ENCODE measurements at regions of chr22 and their contacts with region 1.

Region 1: GRCh38 chr22:20463324-20464095 is 25.9 kb upstream of the SCARF2 start:
- DNase-seq: peak in 7 of 9 donors; percentile 38 to 73 (median 66)
- ATAC-seq: peak; percentile 78
- H3K4me3 ChIP-seq: peak overlapping the region; percentile 34
- H3K4me3 Mint-ChIP-seq: peak overlapping the region; percentile 64 to 83 (median 74)
- H3K27ac ChIP-seq: peak overlapping the region; percentile 75
- H3K27ac Mint-ChIP-seq: peak overlapping the region; percentile 97 to 99 (median 98)
- H3K4me1 ChIP-seq: peaks cover 36 to 57% of the 10 kb centered on the region in 2 donors
- H3K4me1 Mint-ChIP-seq: peaks cover 35 to 78% (median 71%) of the 10 kb centered on the region in 7 donors
- H3K27me3 ChIP-seq: no peaks in the 10 kb centered on the region
- H3K27me3 Mint-ChIP-seq: no peaks in the 10 kb centered on the region

Region 2: DNA sequence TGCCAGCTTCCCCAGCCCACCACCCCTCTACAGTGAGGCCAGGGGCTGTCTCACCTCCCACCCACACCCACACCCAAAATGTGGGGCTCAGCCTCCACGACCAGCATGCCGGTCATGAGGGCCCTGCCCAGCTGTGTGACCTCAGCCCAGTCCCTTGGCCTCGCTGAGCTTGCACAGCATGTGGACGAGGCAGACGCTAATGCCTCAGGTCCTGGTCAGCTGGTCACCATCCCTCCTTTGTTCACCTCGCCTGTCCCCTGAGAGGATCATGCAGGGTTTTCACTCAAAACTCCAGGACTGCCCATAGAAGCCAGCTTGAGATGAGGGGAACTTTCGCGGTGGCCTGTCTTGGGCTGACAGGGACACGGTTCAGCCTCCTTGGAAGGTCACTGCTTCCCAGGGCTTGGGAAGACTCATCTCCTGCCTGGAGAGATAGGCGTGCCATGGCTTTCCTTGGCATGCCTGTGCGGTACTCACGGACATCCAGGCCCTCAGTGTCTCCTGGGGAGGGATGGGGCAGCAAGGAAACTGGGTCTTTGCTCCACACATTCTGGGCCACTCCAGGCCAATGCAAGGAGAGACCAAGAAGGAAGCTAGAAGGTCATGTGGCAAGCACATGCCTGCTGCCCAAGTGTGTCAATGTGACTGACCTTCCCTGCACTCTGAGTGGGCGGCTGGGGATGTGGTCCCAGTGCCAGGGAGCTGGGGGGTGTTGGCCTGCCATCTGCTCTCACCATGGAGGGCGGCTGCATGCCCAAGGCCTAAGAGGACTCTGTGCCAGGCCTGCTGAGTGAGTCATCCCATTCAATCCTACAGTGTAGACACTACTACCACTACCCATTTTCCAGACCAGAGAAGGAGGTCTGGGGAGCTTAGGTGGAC is 192.2 kb before region 1 on chr22:
- CTCF ChIA-PET with region 1: no interaction called
- POLR2A ChIA-PET with region 1: no interaction called
- intact Hi-C with region 1: no loop called
- DNase-seq: no peak
- ATAC-seq: no peak
- H3K4me3 ChIP-seq: no peak overlapping the region
- H3K4me3 Mint-ChIP-seq: no peak overlapping the region
- H3K27ac ChIP-seq: no peak overlapping the region
- H3K27ac Mint-ChIP-seq: peak overlapping the region in 1 of 9 donors; percentile 9
- H3K4me1 ChIP-seq: peaks cover 0 to 4% of the 10 kb centered on the region in 2 donors
- H3K4me1 Mint-ChIP-seq: peaks cover 0 to 7% (median 5%) of the 10 kb centered on the region in 7 donors
- H3K27me3 ChIP-seq: no peaks in the 10 kb centered on the region
- H3K27me3 Mint-ChIP-seq: peaks cover 0 to 4% (median 0%) of the 10 kb centered on the region in 5 donors

Region 3: GRCh38 chr22:20393909-20394691 is 69.4 kb before region 1 on chr22 and contains the start of gene ZNF74:
- CTCF ChIA-PET with region 1: interaction called, 6 read pairs
- POLR2A ChIA-PET with region 1: interaction called, 13 read pairs
- intact Hi-C with region 1: no loop called
- DNase-seq: peak; percentile 69 to 90 (median 86)
- ATAC-seq: peak; percentile 98
- H3K4me3 ChIP-seq: peak within 1 kb of the TSS; percentile 71
- H3K4me3 Mint-ChIP-seq: peak within 1 kb of the TSS; percentile 83 to 93 (median 91)
- H3K27ac ChIP-seq: peak within 1 kb of the TSS; percentile 73
- H3K27ac Mint-ChIP-seq: peak within 1 kb of the TSS; percentile 86 to 98 (median 92)
- H3K4me1 ChIP-seq: peaks cover 14 to 17% of the 10 kb centered on the region in 2 donors
- H3K4me1 Mint-ChIP-seq: peaks cover 23 to 52% (median 45%) of the 10 kb centered on the region in 7 donors
- H3K27me3 ChIP-seq: no peaks in the 10 kb centered on the region
- H3K27me3 Mint-ChIP-seq: no peaks in the 10 kb centered on the region
- total RNA-seq, gene ZNF74: 6.1 to 18.2 (median 12.9) TPM

Region 4: DNA sequence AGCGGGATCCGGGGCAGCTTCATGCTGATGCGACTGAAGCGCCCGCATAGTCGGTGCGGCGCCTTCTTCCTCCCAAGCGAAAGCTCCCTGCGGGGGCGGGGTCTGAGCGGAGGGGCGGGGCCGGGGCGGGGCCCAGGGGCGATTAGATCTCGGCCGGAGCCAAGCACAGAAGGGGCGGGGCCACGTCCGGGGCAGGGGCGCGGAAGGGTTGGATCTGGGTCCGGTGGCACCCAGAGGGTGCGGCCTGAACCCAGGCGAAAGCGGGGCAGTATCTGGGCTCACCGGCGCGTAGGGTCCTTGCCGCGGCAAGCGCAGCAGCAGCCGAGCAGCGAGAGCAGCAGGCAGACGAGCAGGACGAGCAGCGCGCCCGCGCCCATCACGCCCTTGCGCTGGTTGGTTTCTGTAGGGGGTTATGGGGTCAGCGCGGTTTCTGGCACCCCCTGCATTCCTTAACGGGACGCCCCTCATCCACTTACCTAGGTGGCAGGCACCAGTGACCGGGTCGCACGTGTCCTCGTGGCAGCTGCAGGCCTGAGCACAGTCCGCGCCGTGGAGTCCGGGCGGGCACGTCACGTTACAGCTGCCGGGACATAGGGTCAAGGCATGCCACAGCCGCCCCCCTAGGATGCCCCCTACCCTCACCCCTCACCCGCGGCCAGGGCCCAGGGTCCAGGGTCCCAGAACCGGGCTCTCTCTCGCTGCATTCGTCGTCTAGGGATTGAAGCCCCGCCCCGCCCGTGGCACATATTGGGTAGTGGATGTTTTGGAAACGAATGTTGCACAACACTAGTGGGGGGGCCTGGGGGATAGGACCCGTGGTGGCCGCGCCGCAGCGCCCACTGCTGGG is 34.0 kb before region 1 on chr22:
- CTCF ChIA-PET with region 1: interaction called, 3 read pairs
- POLR2A ChIA-PET with region 1: interaction called, 10 read pairs
- intact Hi-C with region 1: loop called in 1 of 2 experiments (anchors 1 kb)
- DNase-seq: peak; percentile 56 to 86 (median 75)
- ATAC-seq: peak; percentile 87
- H3K4me3 ChIP-seq: peak overlapping the region; percentile 79
- H3K4me3 Mint-ChIP-seq: peak overlapping the region; percentile 82 to 96 (median 86)
- H3K27ac ChIP-seq: no peak overlapping the region
- H3K27ac Mint-ChIP-seq: peak overlapping the region; percentile 11 to 80 (median 62)
- H3K4me1 ChIP-seq: peaks cover 17 to 26% of the 10 kb centered on the region in 2 donors
- H3K4me1 Mint-ChIP-seq: peaks cover 6 to 22% (median 13%) of the 10 kb centered on the region in 7 donors
- H3K27me3 ChIP-seq: peaks cover 0 to 12% of the 10 kb centered on the region in 2 donors
- H3K27me3 Mint-ChIP-seq: peaks cover 18 to 66% (median 22%) of the 10 kb centered on the region in 5 donors

Region 5: DNA sequence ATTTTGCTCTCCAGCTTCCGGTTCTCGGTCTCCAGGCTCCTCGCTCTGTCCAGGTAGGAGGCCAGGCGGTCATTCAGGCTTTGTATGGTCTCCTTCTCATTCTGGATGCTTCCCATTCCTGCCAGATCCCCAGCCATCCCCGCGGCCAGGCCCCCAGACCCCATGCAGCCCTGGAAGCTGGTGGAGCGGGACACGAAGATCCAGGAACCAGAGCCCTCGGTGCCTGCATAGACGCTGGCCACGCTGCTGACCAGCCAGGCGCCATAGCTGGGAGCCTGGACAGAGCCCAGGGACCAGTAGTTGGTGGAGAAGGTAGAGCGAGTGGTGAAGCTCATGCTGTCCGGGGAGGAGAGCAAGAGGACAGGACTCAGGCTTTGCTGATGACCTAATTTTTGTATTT is 20.3 kb after region 1 on chr22:
- CTCF ChIA-PET with region 1: interaction called, 4 read pairs
- POLR2A ChIA-PET with region 1: interaction called, 11 read pairs
- intact Hi-C with region 1: no loop called
- DNase-seq: no peak
- ATAC-seq: no peak
- H3K4me3 ChIP-seq: no peak overlapping the region
- H3K4me3 Mint-ChIP-seq: no peak overlapping the region
- H3K27ac ChIP-seq: no peak overlapping the region
- H3K27ac Mint-ChIP-seq: no peak overlapping the region
- H3K4me1 ChIP-seq: no peaks in the 10 kb centered on the region
- H3K4me1 Mint-ChIP-seq: peaks cover 8 to 39% (median 28%) of the 10 kb centered on the region in 7 donors
- H3K27me3 ChIP-seq: no peaks in the 10 kb centered on the region
- H3K27me3 Mint-ChIP-seq: no peaks in the 10 kb centered on the region

Region 6: DNA sequence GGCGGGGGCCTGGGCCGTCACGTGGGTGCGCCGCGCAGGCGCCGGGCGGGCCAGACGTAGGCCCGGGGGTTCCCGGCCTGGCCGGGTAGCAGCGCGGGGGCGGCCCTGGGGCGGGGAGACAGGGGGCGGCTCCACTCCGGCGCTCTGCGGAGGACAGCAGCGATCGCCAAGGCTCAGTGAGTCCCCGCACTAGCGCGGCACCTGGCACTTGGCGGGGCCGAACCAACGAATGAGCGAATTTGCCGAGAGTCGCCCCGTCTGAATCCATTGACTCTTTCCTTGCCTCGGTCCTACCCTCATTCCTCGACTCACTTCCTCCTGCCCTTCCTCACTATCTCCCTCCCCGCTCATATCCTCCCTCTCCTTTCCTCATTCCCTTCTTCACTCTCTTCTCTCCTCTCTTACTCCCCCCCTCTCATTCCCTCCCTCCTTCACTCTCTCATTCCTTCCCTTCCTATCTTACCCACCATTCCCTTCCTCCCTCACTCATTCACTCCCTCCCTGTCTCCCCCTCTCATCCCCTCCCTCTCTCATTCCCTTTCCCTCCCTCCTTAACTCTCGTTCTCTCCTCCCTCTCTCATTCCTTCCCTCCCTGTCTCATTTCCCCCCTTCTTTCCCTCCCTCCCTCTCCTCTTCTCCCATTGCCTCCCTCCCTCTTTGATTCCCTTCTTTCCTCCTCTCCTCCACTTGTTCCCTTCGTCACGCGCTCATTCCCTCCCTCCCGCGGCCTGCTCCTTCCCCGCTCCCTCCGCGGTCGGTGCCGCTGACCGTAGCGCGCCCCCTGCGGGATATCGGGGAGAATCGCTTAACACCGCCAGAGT is 32.6 kb after region 1 on chr22:
- CTCF ChIA-PET with region 1: interaction called, 4 read pairs
- POLR2A ChIA-PET with region 1: interaction called, 47 read pairs
- intact Hi-C with region 1: loop called (anchors 1 kb)
- DNase-seq: peak; percentile 82 to 97 (median 87)
- ATAC-seq: peak; percentile 98
- H3K4me3 ChIP-seq: peak overlapping the region; percentile 100
- H3K4me3 Mint-ChIP-seq: peak overlapping the region; percentile 88 to 98 (median 94)
- H3K27ac ChIP-seq: peak overlapping the region; percentile 85
- H3K27ac Mint-ChIP-seq: peak overlapping the region; percentile 89 to 95 (median 93)
- H3K4me1 ChIP-seq: peaks cover 7 to 41% of the 10 kb centered on the region in 2 donors
- H3K4me1 Mint-ChIP-seq: peaks cover 28 to 55% (median 49%) of the 10 kb centered on the region in 7 donors
- H3K27me3 ChIP-seq: no peaks in the 10 kb centered on the region
- H3K27me3 Mint-ChIP-seq: no peaks in the 10 kb centered on the region

Region 7: GRCh38 chr22:20526628-20527355 is 63.3 kb after region 1 on chr22:
- CTCF ChIA-PET with region 1: no interaction called
- POLR2A ChIA-PET with region 1: no interaction called
- intact Hi-C with region 1: no loop called
- DNase-seq: no peak
- ATAC-seq: no peak
- H3K4me3 ChIP-seq: no peak overlapping the region
- H3K4me3 Mint-ChIP-seq: peak overlapping the region in 4 of 10 donors; percentile 1 to 42 (median 12)
- H3K27ac ChIP-seq: no peak overlapping the region
- H3K27ac Mint-ChIP-seq: peak overlapping the region; percentile 15 to 90 (median 71)
- H3K4me1 ChIP-seq: peaks cover 25 to 46% of the 10 kb centered on the region in 2 donors
- H3K4me1 Mint-ChIP-seq: peaks cover 52 to 74% (median 70%) of the 10 kb centered on the region in 7 donors
- H3K27me3 ChIP-seq: no peaks in the 10 kb centered on the region
- H3K27me3 Mint-ChIP-seq: no peaks in the 10 kb centered on the region

Region 8: DNA sequence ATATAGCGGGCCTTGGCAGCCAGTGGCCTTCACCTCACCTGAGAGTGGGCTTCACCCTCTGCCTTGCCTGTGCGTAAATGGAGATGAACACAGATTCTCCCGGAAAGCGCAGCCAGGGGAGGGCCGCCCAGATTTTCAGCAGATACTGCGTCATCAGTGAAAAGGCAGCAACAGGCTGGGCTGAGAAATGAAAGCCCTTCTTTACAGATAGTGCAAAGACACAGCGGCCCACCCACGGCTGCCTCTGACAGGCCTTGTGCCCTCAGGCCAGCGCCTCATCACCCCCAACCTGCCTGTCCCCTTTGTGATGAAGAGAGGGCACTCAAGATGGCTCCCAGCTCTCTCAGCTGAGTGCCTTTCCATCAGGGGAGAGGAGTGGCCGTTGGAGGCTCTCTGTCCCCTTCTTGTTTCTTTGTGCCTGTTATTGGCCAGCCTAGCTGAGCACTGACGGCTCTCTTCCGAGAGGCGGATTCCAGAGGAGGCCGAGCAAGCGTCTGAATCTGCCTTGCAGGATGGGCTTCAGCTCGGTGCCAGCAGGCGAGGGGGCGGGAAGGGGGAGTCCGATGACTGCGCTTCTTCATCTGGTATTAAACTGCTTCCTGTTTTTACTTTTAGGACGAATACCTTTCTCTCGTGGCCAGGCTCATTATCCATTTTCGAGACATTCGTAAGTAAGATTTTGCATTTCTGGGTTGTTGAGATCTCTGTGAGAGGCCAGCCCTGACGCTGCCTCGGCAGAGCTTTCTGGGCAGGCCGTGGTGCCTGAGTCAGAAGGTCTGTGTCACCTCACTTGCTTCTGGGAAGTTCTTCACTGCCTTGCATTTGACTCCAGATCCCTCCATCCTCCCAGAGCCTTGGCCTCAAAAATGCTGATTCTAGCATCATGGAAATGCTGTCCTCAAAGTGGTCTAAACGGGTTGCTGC is 87.6 kb after region 1 on chr22:
- CTCF ChIA-PET with region 1: interaction called, 5 read pairs
- POLR2A ChIA-PET with region 1: interaction called, 53 read pairs
- intact Hi-C with region 1: no loop called
- DNase-seq: peak in 8 of 9 donors; percentile 39 to 57 (median 52)
- ATAC-seq: peak; percentile 46
- H3K4me3 ChIP-seq: peak overlapping the region; percentile 61
- H3K4me3 Mint-ChIP-seq: peak overlapping the region; percentile 67 to 91 (median 86)
- H3K27ac ChIP-seq: peak overlapping the region; percentile 69
- H3K27ac Mint-ChIP-seq: peak overlapping the region; percentile 93 to 100 (median 98)
- H3K4me1 ChIP-seq: peaks cover 83 to 93% of the 10 kb centered on the region in 2 donors
- H3K4me1 Mint-ChIP-seq: peaks cover 50 to 93% (median 88%) of the 10 kb centered on the region in 7 donors
- H3K27me3 ChIP-seq: no peaks in the 10 kb centered on the region
- H3K27me3 Mint-ChIP-seq: no peaks in the 10 kb centered on the region

Region 9: DNA sequence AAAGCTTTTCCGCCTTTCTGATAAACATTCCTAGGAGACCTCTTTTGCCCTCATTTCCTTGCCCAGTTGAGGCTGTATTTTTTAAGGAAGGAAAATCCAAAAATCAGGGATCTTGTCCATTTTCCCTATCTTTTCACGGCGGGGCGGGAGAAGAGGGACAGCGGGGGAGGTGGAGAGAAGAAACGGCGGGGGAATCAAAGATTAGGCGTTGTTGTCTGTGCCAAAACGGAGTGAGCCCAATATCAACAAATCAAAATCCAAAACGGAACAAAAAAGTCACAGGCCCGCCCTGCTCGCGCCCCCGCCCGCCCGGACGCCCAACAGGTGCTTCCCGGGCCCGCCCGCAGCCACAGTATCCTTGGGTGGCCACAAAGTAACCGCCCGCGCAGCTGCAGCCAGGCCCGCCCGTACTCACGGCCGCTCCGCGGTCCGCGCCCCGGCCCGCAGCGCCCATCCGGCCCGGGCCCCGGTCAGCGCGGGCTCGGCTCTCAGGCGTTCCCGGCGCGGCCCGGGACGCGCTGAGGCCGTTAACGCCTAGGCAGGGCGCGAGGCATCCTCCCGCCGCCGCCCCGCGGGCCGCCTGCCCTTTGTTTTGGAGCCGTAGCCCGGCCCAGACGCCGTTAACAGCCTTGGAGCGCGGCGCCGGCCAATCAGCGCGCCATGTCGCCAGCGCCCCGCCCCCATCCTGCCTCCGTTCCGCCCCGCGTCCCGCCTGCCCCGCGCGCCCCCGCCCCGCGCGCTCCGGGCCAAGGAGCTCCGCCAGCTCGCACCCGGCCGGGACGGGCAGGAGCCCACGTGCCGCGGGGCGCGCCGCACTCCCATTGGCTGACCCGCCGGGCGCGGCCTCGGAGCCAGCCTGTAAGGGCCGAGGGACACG is 1271.9 kb after region 1 on chr22 and contains the start of gene YPEL1:
- CTCF ChIA-PET with region 1: no interaction called
- POLR2A ChIA-PET with region 1: no interaction called
- intact Hi-C with region 1: loop called in 1 of 2 experiments (anchors 5 kb)
- DNase-seq: peak; percentile 94 to 99 (median 97)
- ATAC-seq: peak; percentile 96
- H3K4me3 ChIP-seq: peak within 1 kb of the TSS; percentile 51
- H3K4me3 Mint-ChIP-seq: peak within 1 kb of the TSS; percentile 86 to 96 (median 92)
- H3K27ac ChIP-seq: peak within 1 kb of the TSS; percentile 66
- H3K27ac Mint-ChIP-seq: peak within 1 kb of the TSS; percentile 67 to 91 (median 85)
- H3K4me1 ChIP-seq: peaks cover 0 to 7% of the 10 kb centered on the region in 2 donors
- H3K4me1 Mint-ChIP-seq: peaks cover 13 to 26% (median 15%) of the 10 kb centered on the region in 7 donors
- H3K27me3 ChIP-seq: no peaks in the 10 kb centered on the region
- H3K27me3 Mint-ChIP-seq: peaks cover 0 to 22% (median 0%) of the 10 kb centered on the region in 5 donors
- total RNA-seq, gene YPEL1: 2.5 to 9.5 (median 3.6) TPM